Activated T-helper 2 cell treated with anti-CD3 and anti-CD28 coated beads, Interferon-gamma antibody, Interleukin-2, Interleukin-4, amounts not matched to agents 10 μg/mL and 5 μg/mL and 100 μg/mL, durations not matched to agents 14 hours and 24 hours and 36 hours (primary cell): ENCODE measurements at regions of chr5 and their contacts with region 1.

Region 1: DNA sequence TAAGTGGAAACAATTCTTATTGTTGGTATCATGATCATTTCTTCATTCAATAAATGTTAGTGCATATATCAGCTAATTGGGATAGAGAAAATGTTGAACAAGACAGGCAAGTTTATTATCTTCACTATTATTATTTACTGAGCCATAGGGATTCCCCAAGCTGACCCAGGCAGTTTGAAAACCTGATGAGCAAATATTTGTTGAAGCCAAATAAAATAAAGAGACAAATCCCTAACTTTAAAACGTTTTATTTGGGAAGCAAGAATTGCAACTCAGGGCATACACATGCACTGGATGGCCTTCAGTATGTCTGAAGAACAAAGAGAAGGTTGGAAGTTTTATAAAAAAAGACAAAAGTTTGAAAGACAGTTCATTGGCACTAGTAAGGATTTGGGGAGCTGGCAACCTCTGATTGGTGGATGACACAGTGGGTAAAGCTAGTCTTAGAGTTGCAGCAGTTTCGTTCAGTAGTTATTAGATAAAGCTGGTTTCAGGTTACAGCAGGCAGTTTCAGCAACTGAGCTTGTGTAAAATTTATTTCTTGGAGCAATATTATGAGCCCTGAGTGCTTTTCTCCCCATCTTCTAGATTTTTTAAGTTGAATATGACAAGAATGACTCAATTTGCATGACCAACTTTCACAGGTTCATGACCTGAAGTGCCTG is 44.7 kb upstream of the PRLR start:
- DNase-seq: no peak
- H3K4me3 Mint-ChIP-seq: no peak overlapping the region
- H3K27ac Mint-ChIP-seq: no peak overlapping the region
- H3K4me1 Mint-ChIP-seq: no peaks in the 10 kb centered on the region
- H3K27me3 Mint-ChIP-seq: no peaks in the 10 kb centered on the region

Region 2: DNA sequence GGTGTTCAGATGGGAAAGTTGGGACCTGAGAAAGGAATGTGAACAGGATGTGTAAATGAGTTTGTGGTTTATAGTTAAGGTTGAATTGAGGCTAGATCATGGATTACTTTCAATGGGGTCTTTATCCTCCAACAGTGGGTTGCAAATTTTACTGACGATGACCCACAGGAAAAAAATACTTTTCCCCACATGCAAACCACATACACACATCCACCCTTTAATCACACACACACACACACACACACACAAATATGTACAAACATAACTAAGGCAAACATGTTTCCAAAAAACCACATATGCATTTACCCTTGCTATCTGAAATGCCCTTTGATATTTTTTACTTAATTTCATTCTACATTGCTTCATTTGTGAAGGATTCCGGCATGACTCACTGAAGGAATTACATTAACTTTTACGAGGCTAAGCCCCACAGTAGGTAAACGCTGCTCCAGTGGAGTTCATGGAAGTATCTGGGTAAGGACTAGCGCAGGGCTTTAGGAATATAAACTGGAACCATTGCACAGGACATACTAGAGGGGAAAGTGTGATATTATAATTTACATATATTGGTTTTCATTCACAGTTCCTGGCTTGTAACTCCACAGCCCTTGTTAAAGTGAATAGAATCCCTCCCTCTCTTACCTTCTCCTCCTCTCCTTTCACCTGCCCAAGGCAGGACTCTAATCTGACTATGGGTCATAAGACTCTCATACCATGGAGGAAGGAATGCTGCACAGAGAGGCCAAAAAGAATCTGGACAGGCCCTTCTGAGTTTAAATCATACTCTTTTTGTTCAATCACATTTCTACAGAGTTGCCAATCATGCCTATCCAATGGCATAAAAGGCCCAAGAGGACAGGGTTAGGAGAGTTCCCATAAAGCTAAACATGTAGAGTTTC is 334.2 kb after region 1 on chr5:
- intact Hi-C with region 1: no loop called
- DNase-seq: no peak
- H3K4me3 Mint-ChIP-seq: no peak overlapping the region
- H3K27ac Mint-ChIP-seq: no peak overlapping the region
- H3K4me1 Mint-ChIP-seq: no peaks in the 10 kb centered on the region
- H3K27me3 Mint-ChIP-seq: peaks cover 12% of the 10 kb centered on the region

Region 3: DNA sequence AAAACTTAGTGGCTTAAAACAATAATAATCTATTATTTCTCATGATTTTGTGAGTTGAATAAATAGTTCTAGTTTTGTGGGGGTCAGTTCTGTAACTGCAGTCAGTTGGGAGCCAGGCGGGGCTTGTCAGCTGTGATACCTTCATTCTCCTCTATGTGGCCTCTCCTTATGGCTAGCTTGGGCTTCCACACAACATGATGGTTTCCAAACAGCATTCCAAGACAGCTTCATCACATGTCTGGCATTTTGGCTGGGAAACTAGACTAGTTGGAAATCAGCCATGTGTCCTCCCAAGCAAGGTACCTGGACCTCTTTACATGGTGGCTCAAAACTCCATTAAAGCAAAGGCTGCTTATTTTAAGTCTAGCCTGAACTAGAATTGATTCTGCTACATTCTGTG is 1088.1 kb after region 1 on chr5:
- intact Hi-C with region 1: loop called (anchors 5 kb)
- DNase-seq: no peak
- H3K4me3 Mint-ChIP-seq: no peak overlapping the region
- H3K27ac Mint-ChIP-seq: no peak overlapping the region
- H3K4me1 Mint-ChIP-seq: peaks cover 7% of the 10 kb centered on the region
- H3K27me3 Mint-ChIP-seq: no peaks in the 10 kb centered on the region